ENCODE measurements at regions of chr5 and their contacts with region 1.

Region 1: GRCh38 chr5:173972925-173973615 is 15.9 kb upstream of the C5orf47 start:
- DNase-seq: peak; percentile 89
- ATAC-seq: peak; percentile 69
- H3K4me3 Mint-ChIP-seq: peak overlapping the region; percentile 73
- H3K27ac Mint-ChIP-seq: peak overlapping the region; percentile 94
- H3K4me1 Mint-ChIP-seq: peaks cover 52% of the 10 kb centered on the region
- H3K27me3 Mint-ChIP-seq: peaks cover 7% of the 10 kb centered on the region; the same call in 1 of the 2 replicates
- CTCF ChIP-seq: peak; percentile 78

Region 2: DNA sequence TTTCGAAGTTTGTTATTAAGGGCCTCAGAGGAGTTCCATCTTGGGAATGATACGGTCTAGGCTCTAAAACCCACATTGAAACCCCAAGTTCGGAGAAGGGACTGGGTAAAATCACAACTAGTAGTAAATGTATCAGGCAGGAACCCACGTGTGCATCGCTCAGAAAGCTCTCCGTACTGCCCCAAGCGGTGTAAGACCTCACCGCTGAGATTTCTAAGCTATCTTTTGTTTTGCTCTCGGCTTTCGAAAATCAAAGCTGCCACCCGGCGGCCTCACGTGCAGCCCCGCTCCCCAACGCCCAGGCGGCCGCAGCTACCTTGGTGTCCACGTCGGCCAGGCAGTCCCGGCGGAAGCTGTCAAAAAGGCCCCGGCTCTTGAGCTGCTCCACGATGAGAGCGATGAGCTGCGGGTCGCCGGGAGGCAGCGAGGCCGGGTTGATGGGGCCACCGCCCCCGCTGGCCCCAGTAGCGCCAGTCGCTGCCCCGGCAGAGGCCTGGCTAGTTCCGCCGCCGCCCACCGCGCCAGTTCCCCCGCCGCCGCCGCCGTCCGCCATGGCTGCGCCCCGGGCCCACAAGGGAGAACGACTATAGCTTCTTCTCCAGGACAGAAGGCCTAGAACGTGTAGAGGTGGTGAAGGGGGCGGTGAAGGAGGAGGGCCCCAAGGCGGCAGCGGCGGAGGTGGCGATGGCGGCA is 357.0 kb before region 1 on chr5:
- CTCF ChIA-PET with region 1: interaction called, 23 read pairs
- POLR2A ChIA-PET with region 1: interaction called, 6 read pairs
- DNase-seq: peak; percentile 64
- ATAC-seq: peak; percentile 29
- H3K4me3 Mint-ChIP-seq: peak overlapping the region; percentile 92
- H3K27ac Mint-ChIP-seq: peak overlapping the region; percentile 86
- H3K4me1 Mint-ChIP-seq: peaks cover 45% of the 10 kb centered on the region
- H3K27me3 Mint-ChIP-seq: no peaks in the 10 kb centered on the region
- CTCF ChIP-seq: no peak

Region 3: DNA sequence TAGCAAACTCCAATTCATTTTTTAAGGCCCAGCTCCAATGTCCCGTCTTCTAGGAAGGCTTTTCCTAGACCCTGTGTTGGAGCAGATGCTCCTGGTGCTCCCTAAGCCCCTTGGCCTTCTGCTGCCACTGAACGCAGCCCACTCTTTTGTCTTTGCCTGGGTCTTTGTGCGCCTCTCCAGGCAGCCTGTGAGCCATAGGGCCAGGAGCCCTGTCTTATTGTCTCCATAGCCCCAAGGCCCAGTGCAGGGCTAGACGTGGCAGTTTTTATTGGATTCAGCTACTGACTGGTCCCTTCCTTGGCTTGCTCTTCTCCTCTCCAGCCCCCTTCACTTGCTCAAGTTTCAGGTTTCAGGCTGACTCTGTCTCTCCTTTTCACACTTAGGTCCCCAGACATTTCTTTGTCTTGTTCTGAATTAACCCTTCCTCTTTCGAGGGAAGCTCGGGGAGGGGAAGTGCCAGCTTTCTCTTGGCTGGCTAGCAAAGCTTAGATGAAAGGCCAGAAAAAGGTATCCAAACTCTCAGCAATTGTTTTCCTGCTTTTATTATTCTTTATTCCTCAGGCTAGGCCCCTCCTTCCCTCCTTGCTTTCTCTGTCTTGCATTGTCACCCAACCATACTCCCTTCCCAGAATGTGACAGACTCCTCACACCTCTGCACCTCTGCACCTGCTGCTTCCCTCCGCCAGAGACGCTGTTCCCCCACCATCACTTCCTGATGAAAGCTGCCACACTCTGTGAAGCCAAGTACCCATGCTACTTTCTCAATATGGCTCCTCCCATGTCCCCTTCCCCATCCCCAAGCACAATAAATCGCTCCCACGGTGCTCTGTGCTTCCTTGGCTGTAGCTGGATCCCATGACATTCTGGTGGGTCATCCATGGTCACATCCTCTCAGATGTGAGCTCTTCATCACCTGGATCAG is 186.5 kb before region 1 on chr5:
- CTCF ChIA-PET with region 1: interaction called, 10 read pairs
- POLR2A ChIA-PET with region 1: no interaction called
- DNase-seq: no peak
- ATAC-seq: peak; percentile 74
- H3K4me3 Mint-ChIP-seq: no peak overlapping the region
- H3K27ac Mint-ChIP-seq: peak overlapping the region; percentile 8; the same call in 1 of the 2 replicates
- H3K4me1 Mint-ChIP-seq: peaks cover 17% of the 10 kb centered on the region
- H3K27me3 Mint-ChIP-seq: peaks cover 5% of the 10 kb centered on the region
- CTCF ChIP-seq: no peak

Region 4: DNA sequence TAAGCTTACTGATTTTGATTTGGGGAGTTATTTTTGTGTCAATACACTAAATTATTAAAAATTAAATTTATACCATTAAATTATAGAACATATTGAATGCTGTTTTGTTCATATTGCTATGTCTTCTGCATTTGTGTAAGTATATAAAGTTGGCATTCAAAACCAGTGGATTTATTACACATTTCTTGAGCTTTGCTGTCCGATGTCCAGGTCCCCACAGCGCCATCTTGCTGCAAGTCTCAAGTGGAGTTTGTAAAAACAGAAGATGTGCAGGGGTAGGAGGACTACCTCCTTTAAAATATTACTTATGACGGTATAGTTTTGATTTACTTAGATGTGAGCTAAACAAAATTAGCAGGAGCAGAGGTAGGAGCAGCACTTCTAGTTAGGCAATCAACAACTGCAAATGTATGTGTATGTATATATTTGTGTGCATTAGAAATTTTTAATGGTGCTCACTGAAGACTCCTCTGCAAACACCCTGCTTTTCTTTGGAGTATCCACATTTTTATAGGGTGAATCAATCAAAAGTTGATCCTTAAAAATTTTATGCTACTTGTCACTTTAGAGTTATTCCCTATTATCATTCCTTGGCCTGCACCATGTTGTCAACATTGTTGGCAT is 47.5 kb before region 1 on chr5:
- CTCF ChIA-PET with region 1: interaction called, 14 read pairs
- POLR2A ChIA-PET with region 1: no interaction called
- DNase-seq: peak; percentile 31
- ATAC-seq: no peak
- H3K4me3 Mint-ChIP-seq: no peak overlapping the region
- H3K27ac Mint-ChIP-seq: no peak overlapping the region
- H3K4me1 Mint-ChIP-seq: peaks cover 25% of the 10 kb centered on the region
- H3K27me3 Mint-ChIP-seq: no peaks in the 10 kb centered on the region
- CTCF ChIP-seq: no peak

Region 5: DNA sequence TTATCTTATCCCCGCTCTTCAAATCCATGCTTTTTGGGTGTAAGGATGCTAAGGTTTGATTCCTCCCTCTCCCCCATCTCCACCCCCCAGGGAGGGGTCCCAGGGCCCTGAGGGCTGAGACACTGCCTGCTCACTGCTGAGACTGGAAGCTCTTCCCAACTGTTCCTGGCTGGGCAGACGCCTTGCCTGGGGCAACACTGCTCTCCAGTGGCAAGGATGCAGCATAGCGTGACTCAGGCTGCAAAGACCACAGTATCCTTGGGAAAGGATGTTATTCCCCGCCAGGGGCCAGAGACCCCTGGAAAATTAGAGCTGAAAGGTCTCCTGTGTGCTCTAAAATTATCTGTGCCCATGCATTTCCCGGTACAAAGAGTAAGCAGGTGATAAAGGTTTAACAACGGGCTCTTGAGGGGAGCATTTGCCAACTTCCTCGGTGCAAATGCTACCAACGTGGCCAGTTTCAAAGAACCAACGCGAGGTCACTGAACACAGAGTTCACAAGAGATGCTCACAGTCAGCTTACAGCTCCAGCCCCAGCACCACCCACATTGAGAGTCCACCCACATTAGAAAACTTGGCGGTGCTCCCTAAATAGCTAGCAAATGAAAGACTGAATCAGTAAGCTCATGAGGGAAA is 344.3 kb after region 1 on chr5:
- CTCF ChIA-PET with region 1: interaction called, 31 read pairs
- POLR2A ChIA-PET with region 1: no interaction called
- DNase-seq: peak; percentile 76
- ATAC-seq: peak; percentile 97
- H3K4me3 Mint-ChIP-seq: no peak overlapping the region
- H3K27ac Mint-ChIP-seq: no peak overlapping the region
- H3K4me1 Mint-ChIP-seq: 0 out of 2 replicates have a peak, but pooled peaks cover 13% of the 10 kb centered on the region
- H3K27me3 Mint-ChIP-seq: peaks cover 22% of the 10 kb centered on the region
- CTCF ChIP-seq: peak; percentile 76

Measured in WTC11 (cell line).